Body of pancreas (tissue), 4 donors: ENCODE measurements at regions of chr1 and their contacts with region 1.

Region 1: DNA sequence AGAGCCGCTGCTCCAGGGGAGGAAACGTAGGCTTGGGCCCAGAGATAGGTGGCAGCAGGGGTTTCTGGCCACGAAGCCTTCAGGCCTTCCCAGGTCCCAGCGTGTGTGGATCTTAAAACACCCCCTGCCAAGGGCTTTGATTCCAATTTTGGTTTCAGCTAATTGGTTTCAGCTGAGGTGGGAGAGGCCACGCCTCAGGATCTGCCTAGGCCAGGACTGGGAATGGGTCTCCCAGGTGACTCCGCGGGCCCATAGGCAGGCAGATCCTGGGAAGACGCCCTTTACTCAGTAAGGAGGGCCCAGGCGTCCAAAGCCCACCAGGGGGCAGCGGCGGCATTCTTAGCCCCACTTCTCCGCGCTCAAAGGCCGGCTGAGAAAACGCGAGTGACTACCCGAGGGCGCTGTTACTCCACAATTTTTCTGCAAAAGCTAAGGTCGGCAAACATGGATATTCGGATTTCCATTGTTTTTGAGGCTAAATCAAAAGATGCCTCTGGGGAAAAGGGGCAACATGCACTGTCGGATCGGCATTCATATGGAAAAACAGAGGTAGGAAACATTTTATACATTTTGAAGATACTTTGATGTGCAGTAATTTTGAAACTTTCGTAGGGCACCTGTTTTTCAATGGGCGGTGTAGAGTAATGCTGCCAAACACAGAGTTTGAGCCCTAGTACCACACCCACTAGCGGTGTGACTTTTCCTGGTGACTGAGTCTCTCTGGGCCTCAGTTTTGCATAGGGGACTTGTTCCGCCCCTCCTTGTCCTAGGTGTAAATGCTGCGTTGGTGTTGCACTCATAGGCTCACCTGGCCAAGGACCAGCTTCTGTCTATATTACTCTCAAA is 31.8 kb upstream of the BCL10 start:
- DNase-seq: peak; percentile 90 to 95 (median 92)
- ATAC-seq: peak; percentile 100
- H3K4me3 ChIP-seq: no peak overlapping the region
- H3K27ac ChIP-seq: no peak overlapping the region
- H3K4me1 ChIP-seq: peaks cover 7% of the 10 kb centered on the region
- H3K27me3 ChIP-seq: no peaks in the 10 kb centered on the region
- CTCF ChIP-seq: peak; percentile 92 to 99 (median 99)
- POLR2A ChIP-seq: no peak

Region 2: DNA sequence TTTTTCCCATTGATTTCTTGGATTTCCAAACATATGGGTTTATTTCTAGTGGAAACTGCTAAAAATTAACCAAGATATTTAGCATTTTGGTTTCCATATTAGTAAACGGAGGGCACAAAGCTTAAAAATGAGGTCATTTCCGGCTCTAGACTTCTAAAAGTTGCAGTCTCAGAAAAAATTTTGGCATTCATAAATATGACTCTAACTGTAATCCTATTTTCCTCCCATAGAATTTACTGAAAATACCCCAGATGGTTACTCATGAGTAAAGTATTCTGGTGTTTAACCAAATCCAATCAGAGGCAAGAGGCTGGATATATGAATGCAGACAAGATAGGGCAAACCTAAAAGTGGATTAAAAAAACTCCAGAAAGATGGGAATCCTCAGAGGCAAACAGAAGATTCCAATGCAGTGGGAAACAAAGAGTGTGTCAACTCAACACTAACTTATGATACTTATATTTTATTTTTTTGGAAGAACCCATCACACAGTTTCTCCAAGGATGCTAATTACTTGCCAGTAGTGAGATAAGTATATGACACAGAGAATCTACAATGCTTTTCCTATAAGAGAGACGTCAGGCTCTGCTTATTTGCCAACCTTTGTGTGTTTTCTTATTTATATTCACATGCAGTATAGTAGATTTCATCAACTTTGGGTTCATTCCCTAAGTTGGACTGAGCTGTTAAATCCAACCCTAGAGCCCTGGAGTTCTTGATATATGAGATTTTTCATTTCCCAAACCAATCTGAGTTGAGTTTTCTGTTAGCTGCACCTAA is 58.4 kb after region 1 on chr1:
- intact Hi-C with region 1: no loop called
- DNase-seq: no peak
- ATAC-seq: no peak
- H3K4me3 ChIP-seq: no peak overlapping the region
- H3K27ac ChIP-seq: no peak overlapping the region
- H3K4me1 ChIP-seq: peaks cover 14% of the 10 kb centered on the region
- H3K27me3 ChIP-seq: no peaks in the 10 kb centered on the region
- CTCF ChIP-seq: no peak
- POLR2A ChIP-seq: no peak

Region 3: DNA sequence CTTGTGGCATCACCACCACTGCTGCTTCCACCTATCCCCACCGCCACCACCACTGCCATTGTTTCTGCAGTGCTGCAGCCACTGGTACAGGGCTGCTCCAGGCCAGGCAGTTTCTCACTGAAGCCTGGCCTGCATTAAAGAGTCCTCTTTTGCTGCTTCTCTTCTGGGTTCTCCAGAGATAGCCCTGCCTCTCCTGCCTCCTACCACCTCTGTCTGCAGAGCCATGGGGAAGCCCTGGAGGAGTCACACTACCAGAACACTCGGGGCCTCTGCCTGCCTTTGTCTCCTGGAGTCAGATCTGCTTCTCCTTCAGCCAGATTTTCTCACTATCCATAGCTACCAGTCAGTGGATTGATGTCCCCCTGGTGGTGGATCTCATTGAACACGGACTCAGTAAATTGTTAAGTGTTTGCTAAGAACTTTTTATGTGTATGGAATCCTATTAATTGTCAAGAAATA is 194.4 kb after region 1 on chr1:
- intact Hi-C with region 1: loop called (anchors 5 kb)
- DNase-seq: peak; percentile 73 to 82 (median 78)
- ATAC-seq: peak; percentile 95
- H3K4me3 ChIP-seq: no peak overlapping the region
- H3K27ac ChIP-seq: no peak overlapping the region
- H3K4me1 ChIP-seq: peaks cover 14% of the 10 kb centered on the region
- H3K27me3 ChIP-seq: no peaks in the 10 kb centered on the region
- CTCF ChIP-seq: peak; percentile 53 to 88 (median 76)
- POLR2A ChIP-seq: no peak

Region 4: GRCh38 chr1:85580872-85581801 is 272.9 kb after region 1 on chr1:
- intact Hi-C with region 1: loop called (anchors 10 kb)
- DNase-seq: peak; percentile 78 to 87 (median 84)
- ATAC-seq: peak; percentile 69
- H3K4me3 ChIP-seq: peak overlapping the region; percentile 11 to 82
- H3K27ac ChIP-seq: peak overlapping the region; percentile 82 to 99 (median 96)
- H3K4me1 ChIP-seq: peaks cover 18% of the 10 kb centered on the region
- H3K27me3 ChIP-seq: no peaks in the 10 kb centered on the region
- CTCF ChIP-seq: peak; percentile 76 to 94 (median 93)
- POLR2A ChIP-seq: peak; percentile 14 to 85 (median 77)